PC-3 (cell line): ENCODE measurements at regions of chr1 and their contacts with region 1.

Region 1: DNA sequence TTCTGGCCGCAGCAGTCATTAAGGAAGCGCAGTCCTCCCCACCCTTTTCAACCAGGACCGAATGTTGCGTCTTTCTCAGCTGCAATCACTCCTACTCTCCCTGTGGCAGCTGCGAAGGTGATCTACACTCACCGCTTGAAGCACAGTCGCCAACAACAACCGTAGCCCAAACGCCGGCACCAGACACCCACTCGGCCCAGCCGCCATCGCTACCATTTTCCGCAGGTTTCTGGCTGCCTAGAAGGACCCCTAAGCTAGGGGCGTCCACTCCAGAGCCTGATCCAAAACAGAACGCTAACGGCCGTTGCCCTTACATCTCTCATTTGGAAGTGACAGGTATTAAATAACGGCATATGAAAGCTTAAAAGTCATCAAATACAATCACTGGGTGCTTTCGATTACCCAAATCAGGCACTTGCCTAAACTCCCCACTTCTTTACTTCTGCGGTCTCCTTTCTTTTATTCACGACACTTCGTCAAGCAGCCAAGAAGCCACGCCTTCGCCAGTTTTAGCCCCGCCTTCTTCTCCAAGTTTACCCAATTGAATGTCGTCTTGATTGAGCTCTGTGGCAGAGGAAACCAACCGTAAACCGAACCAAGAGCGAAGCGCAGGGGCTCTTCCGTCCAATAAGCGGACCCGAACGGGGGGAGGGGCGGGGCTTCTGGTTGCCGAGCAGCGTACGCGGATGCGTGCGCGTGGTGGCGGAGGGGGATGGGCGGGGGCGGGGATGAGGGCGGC is at the start of gene SELENOF:
- DNase-seq: peak; percentile 100
- ATAC-seq: peak; percentile 83
- H3K4me3 ChIP-seq: peak within 1 kb of the TSS; percentile 99
- H3K27ac ChIP-seq: peak within 1 kb of the TSS; percentile 68
- H3K4me1 ChIP-seq: peaks cover 17% of the 10 kb centered on the region
- H3K27me3 ChIP-seq: no peaks in the 10 kb centered on the region
- CTCF ChIP-seq: no peak
- total RNA-seq, gene SELENOF: 143 and 174 TPM in 2 replicates

Region 2: DNA sequence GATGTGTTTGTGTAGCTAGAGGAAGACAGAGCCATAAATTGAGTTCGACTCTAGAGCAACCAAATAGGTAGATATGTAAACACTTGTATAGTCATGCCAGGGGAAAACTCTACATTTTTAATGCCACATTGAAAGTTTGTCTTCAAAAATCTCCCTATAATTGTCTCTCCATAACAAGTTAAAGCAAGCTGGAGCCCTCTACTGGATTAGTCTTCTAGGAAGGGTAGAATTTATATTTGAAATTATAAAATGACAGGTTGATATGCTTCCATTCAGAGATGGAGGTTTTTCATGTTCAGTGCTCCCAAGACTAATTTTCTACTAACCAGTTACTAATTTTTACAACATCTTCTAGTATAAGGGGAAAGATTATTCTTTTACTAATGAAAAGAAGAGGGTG is 744.4 kb before region 1 on chr1:
- CTCF ChIA-PET with region 1: no interaction called
- POLR2A ChIA-PET with region 1: no interaction called
- intact Hi-C with region 1: no loop called
- DNase-seq: peak; percentile 30
- ATAC-seq: peak; percentile 22; the same call in 1 of the 2 replicates
- H3K4me3 ChIP-seq: no peak overlapping the region
- H3K27ac ChIP-seq: no peak overlapping the region
- H3K4me1 ChIP-seq: no peaks in the 10 kb centered on the region
- H3K27me3 ChIP-seq: peaks cover 11% of the 10 kb centered on the region
- CTCF ChIP-seq: peak; percentile 43; the same call in 1 of the 2 replicates

Region 3: DNA sequence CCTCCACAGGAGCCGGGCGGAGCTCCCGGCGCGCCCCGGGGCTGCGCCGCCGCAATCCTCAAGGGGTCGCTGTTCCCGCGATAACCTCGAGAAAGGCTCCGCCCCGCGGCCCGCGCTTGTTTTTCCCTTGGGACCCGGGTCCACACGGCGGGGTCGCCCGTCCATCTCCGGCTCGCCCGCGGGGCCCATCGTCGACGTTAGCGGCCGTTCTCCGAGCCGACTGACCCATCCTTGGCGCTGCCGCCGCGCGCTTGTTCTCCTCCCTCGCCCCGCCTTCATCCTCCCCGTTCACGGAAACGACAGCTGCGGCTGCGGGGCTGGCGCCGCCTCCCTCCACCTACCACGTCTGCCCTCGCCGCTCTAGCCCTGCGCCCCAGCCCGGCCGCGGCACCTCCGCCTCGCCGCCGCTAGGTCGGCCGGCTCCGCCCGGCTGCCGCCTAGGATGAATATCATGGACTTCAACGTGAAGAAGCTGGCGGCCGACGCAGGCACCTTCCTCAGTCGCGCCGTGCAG is 209.6 kb before region 1 on chr1 and contains the start of gene SH3GLB1:
- CTCF ChIA-PET with region 1: interaction called, 3 read pairs
- POLR2A ChIA-PET with region 1: no interaction called
- intact Hi-C with region 1: loop called (anchors 10 kb)
- DNase-seq: peak; percentile 87
- ATAC-seq: peak; percentile 88
- H3K4me3 ChIP-seq: peak within 1 kb of the TSS; percentile 92
- H3K27ac ChIP-seq: peak within 1 kb of the TSS; percentile 78
- H3K4me1 ChIP-seq: peaks cover 23% of the 10 kb centered on the region
- H3K27me3 ChIP-seq: no peaks in the 10 kb centered on the region
- CTCF ChIP-seq: peak; percentile 86
- total RNA-seq, gene SH3GLB1: 23.3 and 25.0 TPM in 2 replicates

Region 4: DNA sequence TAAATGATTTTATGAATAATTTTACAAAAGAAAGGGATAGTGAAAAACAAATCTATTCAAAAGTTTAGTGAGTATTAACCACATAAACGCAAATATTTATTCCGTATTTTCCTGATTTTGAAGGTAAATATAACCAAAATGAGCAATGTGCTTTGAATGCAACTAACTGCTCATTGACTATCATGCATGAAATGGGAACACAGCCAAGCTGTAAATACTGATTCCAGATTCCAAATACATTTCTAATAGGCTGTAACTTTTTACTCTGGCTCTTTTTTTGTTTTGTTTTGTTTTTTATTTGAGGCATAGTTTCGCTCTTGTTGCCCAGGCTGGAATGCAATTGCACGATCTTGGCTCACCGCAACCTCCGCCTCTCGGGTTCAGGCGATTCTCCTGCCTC is 42.0 kb before region 1 on chr1:
- CTCF ChIA-PET with region 1: interaction called, 5 read pairs
- POLR2A ChIA-PET with region 1: no interaction called
- intact Hi-C with region 1: loop called (anchors 5 kb)
- DNase-seq: peak; percentile 90
- ATAC-seq: peak; percentile 65
- H3K4me3 ChIP-seq: peak overlapping the region; percentile 57
- H3K27ac ChIP-seq: peak overlapping the region; percentile 53
- H3K4me1 ChIP-seq: peaks cover 21% of the 10 kb centered on the region
- H3K27me3 ChIP-seq: no peaks in the 10 kb centered on the region
- CTCF ChIP-seq: no peak

Region 5: GRCh38 chr1:86965012-86965826 is 51.2 kb after region 1 on chr1:
- CTCF ChIA-PET with region 1: interaction called, 8 read pairs
- POLR2A ChIA-PET with region 1: no interaction called
- intact Hi-C with region 1: loop called (anchors 2 kb)
- DNase-seq: peak; percentile 57
- ATAC-seq: peak; percentile 61
- H3K4me3 ChIP-seq: no peak overlapping the region
- H3K27ac ChIP-seq: no peak overlapping the region
- H3K4me1 ChIP-seq: no peaks in the 10 kb centered on the region
- H3K27me3 ChIP-seq: no peaks in the 10 kb centered on the region
- CTCF ChIP-seq: peak; percentile 85

Region 6: DNA sequence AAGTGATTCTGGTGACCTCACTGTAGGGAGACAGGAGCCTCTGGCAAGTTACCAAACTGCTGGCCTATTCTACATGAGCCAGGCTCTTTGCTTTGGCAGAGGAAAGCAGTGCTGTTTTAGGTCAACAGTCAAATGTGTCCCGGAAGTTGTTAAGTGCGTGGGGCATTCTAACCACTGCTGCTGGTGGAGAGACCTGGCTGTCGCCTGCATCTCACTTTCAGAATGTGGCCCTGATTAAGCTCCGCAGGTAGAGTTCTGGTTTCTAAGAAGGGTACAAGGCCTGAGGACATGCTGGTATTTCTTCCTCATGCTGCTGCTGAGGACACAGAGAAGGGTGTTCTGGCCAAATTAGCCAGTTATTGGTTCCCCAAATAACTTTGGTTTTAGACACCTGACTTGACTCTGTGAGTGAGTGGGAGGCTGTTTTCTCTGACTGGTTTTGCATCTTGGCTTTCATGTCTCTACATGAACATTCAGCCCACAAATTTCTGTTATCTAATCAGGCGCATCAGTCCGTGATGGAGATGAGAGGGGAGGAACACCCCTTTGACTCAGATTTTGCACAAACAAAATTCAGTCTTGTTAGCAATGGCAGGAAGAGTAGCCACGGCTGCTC is 535.4 kb after region 1 on chr1:
- CTCF ChIA-PET with region 1: no interaction called
- POLR2A ChIA-PET with region 1: no interaction called
- intact Hi-C with region 1: no loop called
- DNase-seq: peak; percentile 30
- ATAC-seq: no peak
- H3K4me3 ChIP-seq: no peak overlapping the region
- H3K27ac ChIP-seq: no peak overlapping the region
- H3K4me1 ChIP-seq: no peaks in the 10 kb centered on the region
- H3K27me3 ChIP-seq: no peaks in the 10 kb centered on the region
- CTCF ChIP-seq: no peak